Head of caudate nucleus (tissue), 42 donors: ENCODE measurements at regions of chr2 and their contacts with region 1.

Region 1: GRCh38 chr2:39227628-39228412 is 15.9 kb downstream of the CDKL4 start:
- DNase-seq: peak; percentile 66 to 94 (median 87)

Region 2: GRCh38 chr2:39059366-39059952 is 168.4 kb before region 1 on chr2:
- intact Hi-C with region 1: loop called (anchors 2 kb)
- DNase-seq: no peak

Region 3: DNA sequence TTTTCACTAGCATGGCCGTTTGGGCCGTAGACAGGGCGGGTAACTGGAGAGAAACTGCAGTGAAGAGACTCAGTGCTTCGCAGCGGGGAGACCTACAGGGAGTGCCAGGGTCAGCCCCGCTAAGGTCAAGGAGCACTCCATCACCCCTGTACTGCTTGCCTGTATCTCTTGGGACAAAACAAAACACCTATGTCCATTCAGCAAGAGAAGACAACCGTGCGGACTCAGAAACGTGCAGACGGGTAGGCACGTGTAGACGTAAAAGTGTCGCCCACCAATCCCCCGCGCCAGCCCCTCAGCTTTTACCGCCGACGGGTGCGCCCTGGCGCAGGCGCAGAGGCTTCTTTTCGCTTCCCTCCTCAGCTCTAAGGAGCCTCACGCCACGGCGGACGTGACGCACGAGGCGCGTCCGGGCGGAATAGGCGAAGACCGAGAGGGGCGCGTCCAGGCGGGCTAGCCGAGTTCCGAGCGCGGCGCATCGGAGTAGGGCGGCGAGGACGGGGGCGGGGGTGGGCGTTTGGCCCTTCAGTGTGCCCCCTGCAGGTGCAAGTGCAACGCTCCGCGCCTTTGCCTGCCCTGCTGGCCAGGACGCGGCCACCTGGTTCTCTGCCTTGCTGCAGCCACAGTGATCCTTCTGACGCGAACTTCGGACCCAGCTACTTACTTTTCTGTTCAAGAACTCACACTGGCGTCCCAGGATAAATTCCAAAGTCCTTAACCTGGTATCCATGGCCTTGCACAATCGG is 103.6 kb before region 1 on chr2:
- intact Hi-C with region 1: loop called (anchors 2 kb)
- DNase-seq: peak; percentile 87 to 98 (median 96)